ENCODE measurements at regions of chr3 and their contacts with region 1.

Region 1: DNA sequence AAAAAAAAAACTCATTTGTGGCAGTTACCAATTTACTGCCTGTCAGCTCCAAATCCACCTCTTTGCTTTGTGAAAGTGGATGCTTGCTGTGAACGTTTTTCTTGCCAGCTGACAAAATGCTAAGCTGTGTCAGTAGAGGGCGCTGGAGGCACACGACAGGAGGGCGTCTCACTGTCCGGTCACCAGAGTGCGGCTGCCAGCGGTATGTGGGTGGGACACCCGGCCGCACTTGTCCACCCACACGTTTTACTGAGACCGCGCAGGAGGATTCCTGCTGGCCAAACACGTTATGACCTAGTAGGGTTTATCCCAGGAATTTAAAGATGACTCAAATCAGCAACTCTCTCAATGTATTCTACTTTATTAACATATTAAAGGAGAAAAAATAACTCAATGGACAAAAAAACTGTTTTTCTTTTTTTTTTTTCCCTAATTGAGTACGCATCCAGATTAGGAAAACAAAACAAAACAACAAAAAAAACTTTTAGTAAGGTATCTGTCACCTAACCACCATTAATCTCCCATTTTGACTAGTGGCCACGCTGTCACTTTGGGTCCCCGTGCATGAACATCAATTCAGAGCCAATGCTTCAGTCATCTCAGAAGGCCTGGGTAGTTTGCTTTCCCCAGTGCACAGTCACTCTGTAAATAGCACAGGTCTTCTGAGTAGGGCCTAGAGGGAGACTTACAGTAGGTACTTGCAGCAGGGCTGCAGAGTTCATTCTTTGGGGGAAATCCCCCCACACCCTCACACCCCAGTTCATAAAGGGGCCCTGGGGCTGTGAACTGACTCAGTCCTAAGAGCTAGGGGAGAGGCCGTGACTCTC is 43.8 kb upstream of the RPL35A start:
- DNase-seq: peak; percentile 98
- ATAC-seq: peak; percentile 99
- H3K4me3 ChIP-seq: no peak overlapping the region
- H3K27ac ChIP-seq: no peak overlapping the region
- H3K4me1 ChIP-seq: no peaks in the 10 kb centered on the region
- H3K27me3 ChIP-seq: no peaks in the 10 kb centered on the region
- CTCF ChIP-seq: peak; percentile 99
- POLR2A ChIP-seq: no peak
- RAD21 ChIP-seq: peak; percentile 97

Region 2: GRCh38 chr3:197151569-197151968 is 754.7 kb before region 1 on chr3:
- CTCF ChIA-PET with region 1: no interaction called
- POLR2A ChIA-PET with region 1: no interaction called
- dilution Hi-C with region 1: no loop called
- in situ Hi-C with region 1: no loop called
- intact Hi-C with region 1: no loop called
- DNase-seq: peak; percentile 78
- ATAC-seq: peak; percentile 60; the same call in 1 of the 2 replicates
- H3K4me3 ChIP-seq: no peak overlapping the region
- H3K27ac ChIP-seq: no peak overlapping the region
- H3K4me1 ChIP-seq: no peaks in the 10 kb centered on the region
- H3K27me3 ChIP-seq: no peaks in the 10 kb centered on the region
- CTCF ChIP-seq: no peak
- POLR2A ChIP-seq: no peak
- RAD21 ChIP-seq: no peak

Region 3: DNA sequence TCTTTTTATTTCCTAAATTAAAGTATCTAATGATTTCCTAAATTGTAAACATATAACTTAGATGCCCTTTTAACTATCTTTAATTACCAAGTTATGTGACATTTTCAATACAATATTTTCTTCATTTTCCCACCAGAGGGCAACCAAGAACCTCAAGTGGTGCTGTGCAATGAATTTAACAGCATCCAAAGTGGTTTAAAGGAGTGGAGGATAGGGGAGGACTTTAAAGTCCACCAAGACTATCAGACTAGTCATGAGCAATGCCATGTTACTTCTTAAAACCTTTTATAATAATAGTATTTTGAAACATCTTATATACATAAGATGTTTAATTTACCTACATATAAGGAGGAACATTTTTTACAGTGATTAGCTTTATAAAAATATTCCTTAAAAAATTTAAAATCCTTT is 682.2 kb before region 1 on chr3:
- CTCF ChIA-PET with region 1: no interaction called
- POLR2A ChIA-PET with region 1: no interaction called
- dilution Hi-C with region 1: no loop called
- in situ Hi-C with region 1: no loop called
- intact Hi-C with region 1: no loop called
- DNase-seq: peak; percentile 67
- ATAC-seq: peak; percentile 79
- H3K4me3 ChIP-seq: no peak overlapping the region
- H3K27ac ChIP-seq: no peak overlapping the region
- H3K4me1 ChIP-seq: peaks cover 2% of the 10 kb centered on the region
- H3K27me3 ChIP-seq: no peaks in the 10 kb centered on the region
- CTCF ChIP-seq: peak; percentile 65
- POLR2A ChIP-seq: 0 out of 2 replicates have a peak, but pooled peaks have one; percentile 23
- RAD21 ChIP-seq: peak; percentile 78

Region 4: GRCh38 chr3:197942956-197943556 is 36.8 kb after region 1 on chr3:
- CTCF ChIA-PET with region 1: interaction called, 17 read pairs
- POLR2A ChIA-PET with region 1: no interaction called
- dilution Hi-C with region 1: no loop called
- in situ Hi-C with region 1: loop called (anchors 5 kb)
- intact Hi-C with region 1: loop called (anchors 1 kb)
- DNase-seq: peak; percentile 61
- ATAC-seq: peak; percentile 76
- H3K4me3 ChIP-seq: no peak overlapping the region
- H3K27ac ChIP-seq: no peak overlapping the region
- H3K4me1 ChIP-seq: no peaks in the 10 kb centered on the region
- H3K27me3 ChIP-seq: no peaks in the 10 kb centered on the region
- CTCF ChIP-seq: peak; percentile 72
- POLR2A ChIP-seq: no peak
- RAD21 ChIP-seq: peak; percentile 50

Region 5: DNA sequence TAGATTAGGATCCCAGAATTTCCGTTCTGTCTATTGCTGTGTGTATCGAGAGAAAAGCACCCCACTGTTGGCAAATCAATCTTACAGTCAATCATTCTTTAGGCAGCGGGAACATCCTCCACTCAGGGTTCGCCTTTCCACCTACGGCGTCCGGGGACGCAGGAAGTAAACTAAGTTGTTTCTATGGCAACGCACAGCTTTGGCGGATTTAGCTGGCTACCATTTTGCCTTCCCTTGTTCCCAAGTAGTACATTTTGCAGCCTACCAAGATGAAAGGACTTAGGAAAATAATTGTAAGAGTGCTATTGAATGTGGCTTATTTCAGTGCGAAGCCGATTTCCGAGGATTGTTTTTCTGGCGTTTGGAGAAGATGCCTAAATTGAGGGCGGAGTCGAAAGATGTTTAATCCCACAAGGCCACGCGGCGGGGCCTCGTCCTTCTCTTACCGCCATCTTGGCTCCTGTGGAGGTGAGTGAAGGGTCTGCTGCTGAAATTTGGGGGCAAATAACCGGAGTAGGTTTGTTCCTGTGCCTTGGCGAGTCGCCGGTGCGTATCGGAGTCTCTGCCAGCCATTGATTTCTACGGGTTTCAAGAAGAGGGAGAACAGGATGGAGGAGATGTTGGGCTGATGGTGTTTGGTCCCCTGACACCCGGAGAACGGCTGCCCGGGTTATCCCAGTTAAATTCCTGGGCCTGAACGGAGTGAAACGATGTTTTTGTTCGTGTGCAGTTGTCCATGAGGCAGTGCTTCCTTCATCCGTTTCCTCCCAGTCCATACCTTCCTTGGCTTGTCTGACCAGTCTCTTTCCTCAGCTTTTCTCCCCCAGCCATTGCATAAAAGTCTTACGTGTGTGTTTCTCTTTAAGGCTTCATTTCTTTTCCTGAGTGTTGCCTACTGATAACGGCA is 43.8 kb after region 1 on chr3 and contains the start of gene RPL35A:
- CTCF ChIA-PET with region 1: interaction called, 3 read pairs
- POLR2A ChIA-PET with region 1: no interaction called
- dilution Hi-C with region 1: no loop called
- in situ Hi-C with region 1: loop called (anchors 5 kb)
- intact Hi-C with region 1: no loop called
- DNase-seq: peak; percentile 93
- ATAC-seq: peak; percentile 94
- H3K4me3 ChIP-seq: peak within 1 kb of the TSS; percentile 88
- H3K27ac ChIP-seq: peak within 1 kb of the TSS; percentile 85
- H3K4me1 ChIP-seq: no peaks in the 10 kb centered on the region
- H3K27me3 ChIP-seq: no peaks in the 10 kb centered on the region
- CTCF ChIP-seq: no peak
- POLR2A ChIP-seq: peak; percentile 98
- RAD21 ChIP-seq: no peak
- total RNA-seq, gene RPL35A: 804 and 1,064 TPM in 2 replicates